ENCODE measurements at regions of chr1 and their contacts with region 1.

Region 1: DNA sequence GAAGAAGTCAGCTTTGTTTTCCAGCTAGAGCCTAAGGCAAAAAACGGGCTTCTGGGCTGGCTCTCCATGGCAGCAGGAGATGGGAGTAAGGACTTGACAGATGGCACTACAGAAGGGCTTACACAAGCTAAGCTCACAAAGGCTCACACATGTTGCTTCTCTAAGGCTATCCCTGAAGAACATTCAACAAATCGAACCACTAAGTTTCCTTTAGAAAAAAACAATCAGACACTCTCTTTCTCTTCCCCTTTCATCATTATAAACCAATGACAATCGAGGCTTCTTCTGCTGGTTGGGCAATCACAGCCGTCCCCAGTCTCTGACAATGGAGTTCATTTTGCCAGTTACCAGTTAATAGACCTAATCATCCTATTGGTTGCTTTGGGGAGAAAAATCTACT is 40.5 kb downstream of the TRIT1 start:
- DNase-seq: peak in 4 of 10 donors; percentile 12 to 49 (median 45)
- H3K4me3 ChIP-seq: peak overlapping the region in 4 of 59 donors; percentile 1 to 10 (median 4)
- H3K27ac ChIP-seq: peak overlapping the region in 50 of 59 donors; percentile 4 to 83 (median 60)
- H3K27me3 ChIP-seq: no peaks in the 10 kb centered on the region
- CTCF ChIP-seq: peak in 5 of 56 donors; percentile 8 to 21 (median 16)

Region 2: DNA sequence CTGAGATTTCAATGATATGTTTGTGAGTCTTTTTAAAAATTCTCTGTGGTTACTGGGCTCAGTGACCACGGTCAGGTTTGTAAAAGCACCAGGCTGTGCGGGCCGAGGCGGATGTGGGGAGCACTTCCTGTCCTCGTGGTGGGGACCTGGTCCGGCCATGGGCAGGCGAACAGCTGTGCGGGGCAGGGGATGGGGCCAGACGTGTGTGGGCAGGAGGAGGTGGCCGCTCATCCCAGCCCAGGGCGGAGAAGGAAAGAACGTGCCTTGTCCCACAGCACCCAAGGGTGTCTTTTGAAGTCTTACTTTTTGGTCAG is 66.5 kb before region 1 on chr1:
- intact Hi-C with region 1: no loop called
- DNase-seq: no peak
- H3K4me3 ChIP-seq: no peak overlapping the region
- H3K27ac ChIP-seq: no peak overlapping the region
- H3K27me3 ChIP-seq: peaks cover 0 to under 1% (median 0%) of the 10 kb centered on the region in 45 donors
- CTCF ChIP-seq: no peak

Region 3: DNA sequence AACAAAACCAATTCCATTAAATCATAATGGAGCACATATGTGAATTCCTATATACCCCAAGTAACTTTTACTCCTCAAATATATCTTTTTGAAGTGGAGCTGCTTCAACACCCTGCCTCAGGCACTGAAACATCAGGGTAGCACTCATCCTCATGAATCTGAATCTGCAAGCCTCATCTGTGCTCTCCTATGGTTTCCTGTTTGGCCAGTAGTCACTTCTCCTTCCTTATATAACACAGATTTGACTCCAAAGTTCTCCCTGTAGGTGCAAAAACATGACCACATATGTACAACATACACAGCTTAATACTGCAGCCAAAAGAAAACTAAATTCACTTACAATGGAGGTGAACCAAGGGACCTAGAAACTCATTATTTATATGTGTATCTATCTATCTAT is 33.3 kb after region 1 on chr1:
- intact Hi-C with region 1: loop called in 1 of 2 experiments (anchors 5 kb)
- DNase-seq: no peak
- H3K4me3 ChIP-seq: no peak overlapping the region
- H3K27ac ChIP-seq: peak overlapping the region in 39 of 59 donors; percentile 7 to 93 (median 86)
- H3K27me3 ChIP-seq: no peaks in the 10 kb centered on the region
- CTCF ChIP-seq: no peak

Measured in dorsolateral prefrontal cortex (tissue), 120 donors.